ENCODE measurements at regions of chr11 and their contacts with region 1.

Region 1: DNA sequence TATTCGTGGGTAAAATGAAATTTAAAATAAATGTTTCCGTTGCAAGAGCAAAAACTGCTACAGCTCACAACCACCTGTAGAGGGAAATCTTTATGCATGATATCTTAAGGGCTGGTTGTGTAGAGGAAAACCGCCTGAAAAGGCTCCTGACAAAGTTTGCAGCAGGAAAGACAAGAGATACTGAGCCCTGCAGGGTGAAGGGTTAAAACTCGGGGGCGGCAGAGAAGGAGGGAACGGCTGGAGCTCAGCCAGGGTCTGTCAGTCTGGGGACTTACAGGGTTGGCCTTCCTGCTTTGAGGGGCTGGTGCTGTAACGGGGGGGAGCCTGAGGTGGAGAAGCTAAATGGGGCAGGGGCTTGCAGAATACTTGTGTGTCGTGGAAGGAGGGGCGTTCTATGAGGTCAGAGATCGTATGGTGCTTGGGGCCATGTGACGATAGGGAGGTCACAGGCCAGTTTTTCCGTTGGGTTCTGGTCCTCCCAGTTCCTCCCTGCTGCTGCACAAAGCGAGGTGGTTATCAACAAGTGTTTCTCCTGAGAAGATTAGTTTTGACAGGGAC is 122.9 kb upstream of the HSD17B12 start:
- DNase-seq: no peak
- ATAC-seq: peak in 3 of 8 donors; percentile 30 to 46 (median 37)
- H3K4me3 ChIP-seq: no peak overlapping the region
- H3K27ac ChIP-seq: no peak overlapping the region
- H3K4me1 ChIP-seq: peaks cover 0 to 36% (median 14%) of the 10 kb centered on the region in 9 donors
- H3K27me3 ChIP-seq: peaks cover 0 to 88% (median 84%) of the 10 kb centered on the region in 7 donors
- CTCF ChIP-seq: peak in 7 of 9 donors; percentile 18 to 49 (median 31)

Region 2: GRCh38 chr11:43399983-43400630 is 157.5 kb before region 1 on chr11:
- intact Hi-C with region 1: no loop called
- DNase-seq: no peak
- ATAC-seq: no peak
- H3K4me3 ChIP-seq: no peak overlapping the region
- H3K27ac ChIP-seq: no peak overlapping the region
- H3K4me1 ChIP-seq: no peaks in the 10 kb centered on the region
- H3K27me3 ChIP-seq: no peaks in the 10 kb centered on the region
- CTCF ChIP-seq: no peak

Region 3: GRCh38 chr11:43852057-43852636 is 294.5 kb after region 1 on chr11:
- intact Hi-C with region 1: loop called in 1 of 10 experiments (anchors 10 kb)
- DNase-seq: peak in 1 of 2 donors; percentile 46
- ATAC-seq: peak in 3 of 8 donors; percentile 38 to 74 (median 59)
- H3K4me3 ChIP-seq: no peak overlapping the region
- H3K27ac ChIP-seq: no peak overlapping the region
- H3K4me1 ChIP-seq: no peaks in the 10 kb centered on the region
- H3K27me3 ChIP-seq: no peaks in the 10 kb centered on the region
- CTCF ChIP-seq: peak; percentile 60 to 83 (median 78)